ENCODE measurements at regions of chr2 and their contacts with region 1.

Region 1: GRCh38 chr2:43455731-43456642 is 139.9 kb downstream of the THADA start:
- DNase-seq: no peak
- H3K4me3 ChIP-seq: no peak overlapping the region
- H3K27ac ChIP-seq: no peak overlapping the region
- H3K4me1 ChIP-seq: no peaks in the 10 kb centered on the region
- H3K27me3 ChIP-seq: no peaks in the 10 kb centered on the region
- CTCF ChIP-seq: no peak
- EP300 ChIP-seq: no peak
- POLR2A ChIP-seq: no peak
- RAD21 ChIP-seq: peak in 1 of 2 experiments; percentile 29; a peak in 3 of 4 replicates

Region 2: DNA sequence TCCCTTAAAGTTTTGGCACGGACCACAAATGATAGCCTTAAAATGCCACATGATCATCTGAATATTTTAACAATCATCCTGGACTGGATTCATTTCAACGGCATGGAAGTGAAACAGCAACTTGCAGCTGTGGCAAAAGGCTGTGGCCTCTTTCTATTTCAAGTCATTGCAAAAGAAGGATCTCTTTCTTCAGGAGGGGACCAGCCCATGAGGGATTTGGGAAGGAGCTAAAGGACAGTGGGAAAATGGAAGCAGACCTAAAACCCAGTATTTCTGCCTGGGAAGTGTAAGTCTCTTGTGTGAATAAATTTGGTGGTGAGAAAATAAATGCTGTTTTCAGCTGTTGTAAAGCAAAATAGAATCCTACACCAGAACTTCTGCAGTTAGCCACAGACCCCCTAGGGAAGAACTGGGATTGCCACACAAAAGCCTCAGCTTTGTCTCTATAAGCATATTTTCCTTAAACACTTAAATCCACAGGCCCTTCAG is 122.3 kb before region 1 on chr2:
- CTCF ChIA-PET with region 1: no interaction called
- POLR2A ChIA-PET with region 1: no interaction called
- DNase-seq: no peak
- H3K4me3 ChIP-seq: no peak overlapping the region
- H3K27ac ChIP-seq: no peak overlapping the region
- H3K4me1 ChIP-seq: peaks cover 0 to 7% (median 3%) of the 10 kb centered on the region in 4 experiments
- H3K27me3 ChIP-seq: no peaks in the 10 kb centered on the region
- CTCF ChIP-seq: no peak
- EP300 ChIP-seq: no peak
- POLR2A ChIP-seq: no peak
- RAD21 ChIP-seq: no peak

Region 3: DNA sequence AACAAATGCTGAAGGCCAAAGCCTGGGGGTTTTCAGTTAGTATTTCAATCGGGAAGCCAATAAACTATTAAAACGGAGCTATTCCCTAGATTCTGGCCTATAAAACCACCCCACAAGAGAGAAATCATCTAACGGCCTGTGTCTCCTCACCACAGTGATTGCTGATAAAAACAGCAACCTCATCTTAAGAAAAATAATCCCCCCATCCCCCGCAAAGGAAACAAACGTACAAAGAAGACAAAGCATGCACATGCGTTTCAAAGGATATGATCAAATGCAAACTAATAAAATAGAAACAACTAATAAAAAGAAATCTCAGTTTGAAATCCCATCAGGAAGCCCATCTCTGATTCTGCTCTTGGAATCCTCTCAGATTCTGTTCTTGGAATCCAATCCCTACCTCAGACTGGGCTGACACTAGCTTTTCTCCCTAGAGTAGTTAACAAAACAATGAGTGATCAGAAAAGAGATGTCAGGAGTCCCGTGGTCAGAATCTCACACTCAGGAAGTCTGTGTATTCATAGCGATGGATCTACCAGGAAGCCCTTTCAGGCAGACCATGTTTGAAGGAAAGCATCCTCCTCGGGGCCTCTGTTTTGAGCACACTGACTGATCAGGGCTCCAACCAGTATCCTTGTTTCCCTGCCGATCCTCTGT is 10.9 kb before region 1 on chr2:
- CTCF ChIA-PET with region 1: interaction called, 13 read pairs
- POLR2A ChIA-PET with region 1: interaction called, 3 read pairs
- DNase-seq: no peak
- H3K4me3 ChIP-seq: no peak overlapping the region
- H3K27ac ChIP-seq: 0 out of 2 replicates have a peak overlapping the region, but pooled peaks have one; percentile 10
- H3K4me1 ChIP-seq: peaks cover 3 to 22% (median 9%) of the 10 kb centered on the region in 4 experiments; a peak in 4 of 7 replicates
- H3K27me3 ChIP-seq: no peaks in the 10 kb centered on the region
- CTCF ChIP-seq: no peak
- EP300 ChIP-seq: no peak
- POLR2A ChIP-seq: no peak
- RAD21 ChIP-seq: no peak